Transverse colon (tissue), 4 donors: ENCODE measurements at regions of chr11 and their contacts with region 1.

Region 1: GRCh38 chr11:114065094-114065493 is 5.6 kb downstream of the ZBTB16 start:
- DNase-seq: no peak
- H3K4me3 ChIP-seq: peak overlapping the region in 2 of 4 donors; percentile 6 to 36
- H3K27ac ChIP-seq: peak overlapping the region in 3 of 4 donors; percentile 1 to 26 (median 2)
- H3K4me1 ChIP-seq: peaks cover 0 to 38% (median 34%) of the 10 kb centered on the region in 4 donors
- H3K27me3 ChIP-seq: no peaks in the 10 kb centered on the region
- CTCF ChIP-seq: no peak
- EP300 ChIP-seq: no peak
- POLR2A ChIP-seq: no peak

Region 2: DNA sequence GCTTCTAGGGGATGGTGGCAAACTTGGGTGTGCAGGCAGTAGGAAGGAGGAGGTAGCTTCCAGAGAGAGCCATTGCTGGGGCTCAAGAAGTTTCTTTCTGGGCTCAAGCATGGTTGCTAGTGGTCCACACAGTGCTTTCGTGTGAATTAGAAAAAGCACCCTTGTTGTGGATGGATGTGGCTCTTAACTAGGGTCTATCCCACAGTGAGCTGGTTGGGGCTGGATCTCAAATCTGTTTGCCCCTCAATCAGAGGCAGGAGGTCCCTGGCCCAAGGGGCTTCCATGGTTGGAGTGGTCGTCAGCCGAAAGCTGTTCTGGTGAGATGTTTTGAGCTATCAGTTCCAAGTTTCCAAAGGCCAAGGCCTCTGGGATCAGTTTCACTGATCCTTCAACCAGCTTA is 29.4 kb after region 1 on chr11:
- in situ Hi-C with region 1: no loop called
- intact Hi-C with region 1: loop called (anchors 1 kb)
- DNase-seq: no peak
- H3K4me3 ChIP-seq: no peak overlapping the region
- H3K27ac ChIP-seq: no peak overlapping the region
- H3K4me1 ChIP-seq: peaks cover 24 to 72% (median 43%) of the 10 kb centered on the region in 4 donors
- H3K27me3 ChIP-seq: no peaks in the 10 kb centered on the region
- CTCF ChIP-seq: no peak
- EP300 ChIP-seq: no peak
- POLR2A ChIP-seq: no peak